ENCODE measurements at regions of chr17 and their contacts with region 1.

Region 1: GRCh38 chr17:3935140-3935542 is 18.9 kb upstream of the P2RX1 start:
- DNase-seq: peak; percentile 75
- H3K4me3 ChIP-seq: no peak overlapping the region
- H3K27ac ChIP-seq: no peak overlapping the region
- H3K4me1 ChIP-seq: no peaks in the 10 kb centered on the region
- H3K27me3 ChIP-seq: no peaks in the 10 kb centered on the region
- CTCF ChIP-seq: peak; percentile 83 to 94
- POLR2A ChIP-seq: no peak

Region 2: GRCh38 chr17:3921502-3922319 is 13.4 kb before region 1 on chr17:
- CTCF ChIA-PET with region 1: interaction called, 26 read pairs
- POLR2A ChIA-PET with region 1: interaction called, 4 read pairs
- dilution Hi-C with region 1: no loop called
- intact Hi-C with region 1: no loop called
- DNase-seq: no peak
- H3K4me3 ChIP-seq: no peak overlapping the region
- H3K27ac ChIP-seq: no peak overlapping the region
- H3K4me1 ChIP-seq: peaks cover 8% of the 10 kb centered on the region
- H3K27me3 ChIP-seq: no peaks in the 10 kb centered on the region
- CTCF ChIP-seq: no peak
- POLR2A ChIP-seq: no peak

Region 3: DNA sequence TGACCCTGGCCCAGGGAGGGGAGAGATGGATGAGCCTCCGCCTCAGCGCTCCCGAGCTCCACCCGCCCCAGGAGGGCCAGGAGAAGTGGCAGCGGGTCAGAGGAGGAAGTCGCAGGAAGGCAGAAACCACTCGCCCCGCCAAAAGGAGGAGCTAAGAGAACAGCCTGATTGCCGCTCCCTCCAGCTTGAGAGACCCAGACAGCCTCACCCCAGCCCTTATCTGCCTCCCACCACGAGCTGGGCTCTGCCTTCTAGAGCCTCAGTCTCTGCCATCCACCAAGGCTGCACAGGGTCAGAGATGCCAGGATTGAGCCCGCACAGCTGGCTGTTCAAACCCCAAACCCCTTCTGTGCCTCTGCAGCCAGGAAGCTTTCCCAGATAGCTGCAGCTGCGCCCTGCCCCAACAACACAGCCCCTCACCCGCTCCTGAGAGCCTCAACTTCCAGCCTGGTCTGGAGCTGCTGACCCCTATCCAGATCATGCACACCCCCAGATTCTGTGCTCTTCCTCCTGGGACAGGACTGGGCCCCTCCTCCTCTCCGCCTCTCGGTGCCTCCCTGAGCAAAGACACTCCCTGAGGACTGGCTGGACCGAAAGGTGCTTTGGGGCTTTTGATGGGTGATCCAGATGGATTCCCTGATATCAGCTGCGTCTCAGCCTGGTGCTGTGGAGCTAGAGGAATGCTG is 30.1 kb after region 1 on chr17:
- CTCF ChIA-PET with region 1: interaction called, 19 read pairs
- POLR2A ChIA-PET with region 1: no interaction called
- dilution Hi-C with region 1: no loop called
- intact Hi-C with region 1: no loop called
- DNase-seq: no peak
- H3K4me3 ChIP-seq: no peak overlapping the region
- H3K27ac ChIP-seq: no peak overlapping the region
- H3K4me1 ChIP-seq: peaks cover 4% of the 10 kb centered on the region
- H3K27me3 ChIP-seq: peaks cover 20 to 27% of the 10 kb centered on the region in 2 experiments
- CTCF ChIP-seq: no peak
- POLR2A ChIP-seq: no peak

Region 4: GRCh38 chr17:3976649-3977171 is 41.6 kb after region 1 on chr17:
- CTCF ChIA-PET with region 1: interaction called, 6 read pairs
- POLR2A ChIA-PET with region 1: no interaction called
- dilution Hi-C with region 1: no loop called
- intact Hi-C with region 1: loop called (anchors 2 kb)
- DNase-seq: no peak
- H3K4me3 ChIP-seq: no peak overlapping the region
- H3K27ac ChIP-seq: no peak overlapping the region
- H3K4me1 ChIP-seq: peaks cover 24% of the 10 kb centered on the region
- H3K27me3 ChIP-seq: no peaks in the 10 kb centered on the region
- CTCF ChIP-seq: no peak
- POLR2A ChIP-seq: no peak

Region 5: DNA sequence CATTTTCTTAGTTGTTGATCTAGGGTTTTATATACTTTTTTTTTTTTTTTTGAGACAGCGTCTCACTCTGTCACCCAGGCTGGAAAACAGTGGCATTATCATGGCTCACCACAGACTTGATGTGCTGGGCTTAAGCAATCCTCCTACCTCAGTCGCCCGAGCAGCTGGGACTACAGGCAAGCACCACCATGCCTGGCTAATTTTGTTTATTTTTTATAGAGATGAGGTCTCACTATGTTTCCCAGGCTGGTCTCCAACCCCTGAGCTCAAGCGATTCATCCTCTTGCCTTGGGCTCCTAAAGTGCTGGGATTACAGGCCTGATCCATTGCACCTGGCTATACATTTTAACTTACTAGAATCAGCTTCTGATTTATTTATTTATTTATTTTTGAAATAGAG is 63.3 kb after region 1 on chr17:
- CTCF ChIA-PET with region 1: interaction called, 37 read pairs
- POLR2A ChIA-PET with region 1: no interaction called
- dilution Hi-C with region 1: no loop called
- intact Hi-C with region 1: no loop called
- DNase-seq: no peak
- H3K4me3 ChIP-seq: no peak overlapping the region
- H3K27ac ChIP-seq: no peak overlapping the region
- H3K4me1 ChIP-seq: peaks cover 6% of the 10 kb centered on the region
- H3K27me3 ChIP-seq: peaks cover 2 to 4% of the 10 kb centered on the region in 2 experiments
- CTCF ChIP-seq: no peak
- POLR2A ChIP-seq: no peak

Region 6: GRCh38 chr17:4004517-4005295 is 69.6 kb after region 1 on chr17:
- CTCF ChIA-PET with region 1: interaction called, 53 read pairs
- POLR2A ChIA-PET with region 1: no interaction called
- dilution Hi-C with region 1: no loop called
- intact Hi-C with region 1: loop called (anchors 1 kb)
- DNase-seq: peak; percentile 49
- H3K4me3 ChIP-seq: no peak overlapping the region
- H3K27ac ChIP-seq: no peak overlapping the region
- H3K4me1 ChIP-seq: peaks cover 9% of the 10 kb centered on the region
- H3K27me3 ChIP-seq: no peaks in the 10 kb centered on the region
- CTCF ChIP-seq: peak; percentile 90 to 92
- POLR2A ChIP-seq: no peak

Region 7: GRCh38 chr17:4074831-4075495 is 139.8 kb after region 1 on chr17:
- CTCF ChIA-PET with region 1: interaction called, 7 read pairs
- POLR2A ChIA-PET with region 1: no interaction called
- dilution Hi-C with region 1: no loop called
- intact Hi-C with region 1: loop called (anchors 2 kb)
- DNase-seq: peak; percentile 43
- H3K4me3 ChIP-seq: no peak overlapping the region
- H3K27ac ChIP-seq: no peak overlapping the region
- H3K4me1 ChIP-seq: peaks cover 12% of the 10 kb centered on the region
- H3K27me3 ChIP-seq: no peaks in the 10 kb centered on the region
- CTCF ChIP-seq: peak; percentile 61 to 62
- POLR2A ChIP-seq: no peak

Measured in endothelial cell of umbilical vein (primary cell).